Activated CD4-positive, alpha-beta memory T cell treated with anti-CD3 and anti-CD28 coated beads for 36 hours (primary cell): ENCODE measurements at regions of chr17 and their contacts with region 1.

Region 1: GRCh38 chr17:66255112-66255511 is 25.9 kb upstream of the APOH start:
- DNase-seq: peak; percentile 28
- H3K4me3 Mint-ChIP-seq: peak overlapping the region; percentile 11
- H3K27ac Mint-ChIP-seq: peak overlapping the region; percentile 24
- H3K4me1 Mint-ChIP-seq: peaks cover 13% of the 10 kb centered on the region
- H3K27me3 Mint-ChIP-seq: no peaks in the 10 kb centered on the region

Region 2: DNA sequence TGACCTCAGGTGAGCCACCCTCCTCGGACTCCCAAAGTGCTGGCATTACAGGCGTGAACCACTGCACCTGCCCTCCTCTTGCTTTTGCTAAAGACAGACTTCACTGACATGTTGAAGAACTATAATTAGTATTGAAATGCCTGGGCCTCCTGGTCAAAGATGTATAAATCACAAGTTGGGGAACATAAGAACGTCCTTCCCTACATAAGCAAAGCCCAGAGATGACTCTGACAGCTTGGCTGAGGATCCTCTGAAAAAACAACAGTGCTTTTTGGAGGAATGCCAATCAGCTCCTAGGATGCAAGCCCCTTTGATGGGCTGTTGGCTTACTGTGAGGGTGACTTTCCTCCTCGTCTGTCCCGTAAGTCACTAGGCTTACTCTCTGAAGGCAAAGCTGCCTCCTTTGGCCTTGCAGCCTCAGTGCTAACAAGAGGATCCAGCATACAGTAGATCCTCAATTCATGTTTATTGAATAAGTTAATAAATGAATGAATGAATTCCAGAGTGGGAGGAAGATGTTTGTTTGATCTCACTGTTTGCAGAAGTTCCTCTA is 32.2 kb before region 1 on chr17:
- CTCF ChIA-PET with region 1: no interaction called
- POLR2A ChIA-PET with region 1: no interaction called
- intact Hi-C with region 1: no loop called
- DNase-seq: no peak
- H3K4me3 Mint-ChIP-seq: no peak overlapping the region
- H3K27ac Mint-ChIP-seq: no peak overlapping the region
- H3K4me1 Mint-ChIP-seq: no peaks in the 10 kb centered on the region
- H3K27me3 Mint-ChIP-seq: peaks cover 2% of the 10 kb centered on the region

Region 3: GRCh38 chr17:66426397-66427033 is 171.4 kb after region 1 on chr17:
- CTCF ChIA-PET with region 1: interaction called, 6 read pairs
- POLR2A ChIA-PET with region 1: no interaction called
- intact Hi-C with region 1: loop called (anchors 1 kb)
- DNase-seq: peak; percentile 58
- H3K4me3 Mint-ChIP-seq: peak overlapping the region; percentile 14
- H3K27ac Mint-ChIP-seq: peak overlapping the region; percentile 64
- H3K4me1 Mint-ChIP-seq: peaks cover 75% of the 10 kb centered on the region
- H3K27me3 Mint-ChIP-seq: no peaks in the 10 kb centered on the region